A549 (cell line): ENCODE measurements at regions of chr2 and their contacts with region 1.

Region 1: GRCh38 chr2:28594289-28595108 is 98.6 kb downstream of the PLB1 start:
- DNase-seq: peak; percentile 89 to 90
- ATAC-seq: peak; percentile 59 to 86
- H3K4me3 ChIP-seq: no peak overlapping the region
- H3K27ac ChIP-seq: peak overlapping the region; percentile 69 to 80
- H3K4me1 ChIP-seq: peaks cover 28% of the 10 kb centered on the region
- CTCF ChIP-seq: peak; percentile 97
- EP300 ChIP-seq: no peak
- POLR2A ChIP-seq: no peak
- RAD21 ChIP-seq: peak; percentile 93 to 96

Region 2: DNA sequence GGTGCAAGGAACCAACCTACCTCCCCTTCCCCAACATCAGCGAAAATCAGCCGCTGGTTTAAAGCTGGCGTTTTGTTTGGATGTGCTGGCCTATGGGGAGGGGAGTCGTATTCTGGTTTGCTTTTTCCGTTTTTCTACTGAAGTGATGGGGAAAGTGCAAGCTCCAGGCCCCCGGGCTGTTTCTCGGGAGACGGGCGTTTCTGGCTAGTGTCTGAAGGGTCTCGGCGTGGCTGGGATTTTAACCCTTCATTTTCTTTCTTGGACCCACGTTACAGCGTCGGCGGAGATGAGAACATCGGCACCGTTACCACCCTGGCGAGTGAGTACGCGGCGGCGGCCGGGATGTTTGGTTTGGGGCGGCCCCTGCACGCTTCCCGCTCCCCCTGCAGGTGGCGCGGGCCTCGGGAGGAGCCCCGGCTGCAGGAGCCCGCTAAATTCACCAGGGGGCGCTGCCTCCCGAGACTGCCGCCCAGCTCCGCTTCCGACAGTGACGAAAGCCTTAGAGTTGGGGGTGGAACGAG is 27.9 kb before region 1 on chr2:
- CTCF ChIA-PET with region 1: interaction called, 167 read pairs
- POLR2A ChIA-PET with region 1: interaction called, 3 read pairs
- DNase-seq: peak; percentile 87 to 92
- ATAC-seq: peak; percentile 97 to 98
- H3K4me3 ChIP-seq: peak overlapping the region; percentile 46
- H3K27ac ChIP-seq: peak overlapping the region; percentile 77 to 89
- H3K4me1 ChIP-seq: peaks cover 22% of the 10 kb centered on the region
- CTCF ChIP-seq: peak; percentile 100
- EP300 ChIP-seq: no peak
- POLR2A ChIP-seq: 0 out of 2 replicates have a peak, but pooled peaks have one; percentile 19
- RAD21 ChIP-seq: peak; percentile 93 to 100

Region 3: DNA sequence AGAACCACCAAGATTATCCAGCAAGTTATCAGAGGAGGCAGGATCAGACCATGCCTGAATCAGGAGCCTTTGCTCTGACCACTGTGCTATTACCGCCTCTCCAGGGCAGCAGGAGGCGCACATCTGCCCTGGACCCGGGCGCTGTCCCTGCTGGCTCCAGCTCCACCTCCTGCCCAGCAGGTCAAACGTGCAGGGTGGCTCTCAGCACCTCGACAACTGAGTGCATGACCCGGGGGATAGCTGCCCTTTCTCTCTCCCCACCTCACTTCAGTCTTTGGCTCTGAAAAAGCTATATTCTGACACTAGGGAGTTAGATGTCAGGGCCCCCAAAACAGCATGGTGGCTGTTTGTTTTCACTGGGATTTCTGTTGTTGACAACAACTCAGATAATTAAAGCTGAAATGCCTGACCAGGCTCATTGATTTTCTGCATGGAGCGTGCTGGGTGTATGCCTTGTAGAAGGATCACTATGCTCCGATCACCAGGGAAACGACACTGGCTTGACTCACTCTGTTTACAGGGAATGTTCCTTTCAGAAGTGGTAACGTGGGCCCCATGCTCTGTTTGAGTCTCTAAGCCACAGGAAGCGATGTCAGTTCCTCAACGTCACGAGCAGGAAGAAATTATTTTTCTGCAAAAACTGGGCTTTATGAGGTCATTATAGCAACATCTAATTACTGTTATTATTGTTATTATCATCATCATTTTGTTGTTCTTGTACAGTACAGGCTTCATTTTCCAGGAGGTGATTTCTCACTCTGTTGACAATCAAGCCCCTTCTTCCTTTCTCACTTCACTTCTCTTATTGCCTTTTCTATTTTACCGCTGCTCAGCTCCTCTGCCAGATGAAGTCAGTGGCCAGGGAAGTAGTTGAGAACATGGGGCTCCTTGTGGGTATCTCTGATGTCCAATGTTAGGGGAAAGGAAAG is 26.9 kb after region 1 on chr2:
- CTCF ChIA-PET with region 1: interaction called, 20 read pairs
- POLR2A ChIA-PET with region 1: no interaction called
- DNase-seq: peak; percentile 43 to 68
- ATAC-seq: peak; percentile 90 to 96
- H3K4me3 ChIP-seq: no peak overlapping the region
- H3K27ac ChIP-seq: peak overlapping the region; percentile 42 to 61; a peak in 4 of 6 replicates
- H3K4me1 ChIP-seq: peaks cover 9% of the 10 kb centered on the region
- CTCF ChIP-seq: peak; percentile 54
- EP300 ChIP-seq: no peak
- POLR2A ChIP-seq: no peak
- RAD21 ChIP-seq: peak; percentile 69 to 77

Region 4: DNA sequence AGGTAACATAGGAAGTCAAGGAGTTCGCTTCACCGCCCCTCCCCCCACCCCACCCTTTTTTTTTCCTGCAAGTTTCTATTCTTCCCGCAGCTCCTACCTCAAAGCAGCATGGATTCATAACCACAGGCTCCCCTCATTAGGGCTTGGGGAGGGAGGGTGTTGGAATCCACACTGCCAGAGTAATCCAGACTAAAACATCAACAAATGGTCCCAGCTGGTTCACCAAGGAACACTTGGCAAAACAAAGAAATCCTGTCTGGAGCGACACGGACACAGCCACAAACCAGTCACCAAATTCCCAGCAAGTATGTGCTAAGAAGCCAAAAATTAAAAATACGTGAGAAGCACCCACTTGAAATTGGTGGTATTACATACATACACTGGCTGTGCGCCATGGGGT is 50.3 kb after region 1 on chr2:
- CTCF ChIA-PET with region 1: no interaction called
- POLR2A ChIA-PET with region 1: no interaction called
- DNase-seq: no peak
- ATAC-seq: no peak
- H3K4me3 ChIP-seq: no peak overlapping the region
- H3K27ac ChIP-seq: peak overlapping the region in 1 of 2 experiments; percentile 32; a peak in 2 of 6 replicates
- H3K4me1 ChIP-seq: peaks cover 12% of the 10 kb centered on the region
- CTCF ChIP-seq: no peak
- EP300 ChIP-seq: no peak
- POLR2A ChIP-seq: no peak
- RAD21 ChIP-seq: no peak

Region 5: GRCh38 chr2:28709101-28709500 is 114.6 kb after region 1 on chr2:
- CTCF ChIA-PET with region 1: interaction called, 42 read pairs
- POLR2A ChIA-PET with region 1: no interaction called
- DNase-seq: peak in 1 of 2 experiments; percentile 12
- ATAC-seq: no peak
- H3K4me3 ChIP-seq: no peak overlapping the region
- H3K27ac ChIP-seq: peak overlapping the region; percentile 19 to 82; a peak in 5 of 6 replicates
- H3K4me1 ChIP-seq: peaks cover 49% of the 10 kb centered on the region
- CTCF ChIP-seq: no peak
- EP300 ChIP-seq: no peak
- POLR2A ChIP-seq: no peak
- RAD21 ChIP-seq: no peak

Region 6: DNA sequence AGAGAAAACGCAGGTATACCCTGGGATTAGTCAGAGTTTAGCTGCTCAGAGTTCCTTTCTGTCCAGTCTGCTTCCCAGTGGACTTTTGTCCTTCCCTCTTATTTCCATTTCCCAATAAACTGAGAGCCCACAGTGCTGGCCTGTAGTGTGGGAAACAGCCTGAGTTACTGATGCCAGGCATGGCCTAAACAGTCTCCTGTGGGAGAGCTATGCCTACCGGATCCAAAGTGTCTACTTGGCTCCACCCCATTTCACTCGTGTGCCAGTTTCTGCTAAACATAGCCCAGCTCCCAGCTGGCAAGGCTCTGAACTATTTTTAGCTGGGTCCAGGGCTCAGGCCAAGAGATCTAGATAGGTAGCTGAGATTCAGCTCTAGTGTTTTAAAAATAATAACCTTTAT is 141.5 kb after region 1 on chr2:
- CTCF ChIA-PET with region 1: interaction called, 16 read pairs
- POLR2A ChIA-PET with region 1: no interaction called
- DNase-seq: no peak
- ATAC-seq: peak; percentile 66 to 68; a peak in 5 of 6 replicates
- H3K4me3 ChIP-seq: no peak overlapping the region
- H3K27ac ChIP-seq: no peak overlapping the region
- H3K4me1 ChIP-seq: no peaks in the 10 kb centered on the region
- CTCF ChIP-seq: no peak
- EP300 ChIP-seq: no peak
- POLR2A ChIP-seq: no peak
- RAD21 ChIP-seq: no peak

Region 7: GRCh38 chr2:28768422-28768821 is 173.9 kb after region 1 on chr2:
- CTCF ChIA-PET with region 1: interaction called, 26 read pairs
- POLR2A ChIA-PET with region 1: no interaction called
- DNase-seq: no peak
- ATAC-seq: no peak
- H3K4me3 ChIP-seq: no peak overlapping the region
- H3K27ac ChIP-seq: no peak overlapping the region
- H3K4me1 ChIP-seq: peaks cover 8% of the 10 kb centered on the region; the same call in 1 of the 3 replicates
- CTCF ChIP-seq: no peak
- EP300 ChIP-seq: no peak
- POLR2A ChIP-seq: no peak
- RAD21 ChIP-seq: no peak

Region 8: DNA sequence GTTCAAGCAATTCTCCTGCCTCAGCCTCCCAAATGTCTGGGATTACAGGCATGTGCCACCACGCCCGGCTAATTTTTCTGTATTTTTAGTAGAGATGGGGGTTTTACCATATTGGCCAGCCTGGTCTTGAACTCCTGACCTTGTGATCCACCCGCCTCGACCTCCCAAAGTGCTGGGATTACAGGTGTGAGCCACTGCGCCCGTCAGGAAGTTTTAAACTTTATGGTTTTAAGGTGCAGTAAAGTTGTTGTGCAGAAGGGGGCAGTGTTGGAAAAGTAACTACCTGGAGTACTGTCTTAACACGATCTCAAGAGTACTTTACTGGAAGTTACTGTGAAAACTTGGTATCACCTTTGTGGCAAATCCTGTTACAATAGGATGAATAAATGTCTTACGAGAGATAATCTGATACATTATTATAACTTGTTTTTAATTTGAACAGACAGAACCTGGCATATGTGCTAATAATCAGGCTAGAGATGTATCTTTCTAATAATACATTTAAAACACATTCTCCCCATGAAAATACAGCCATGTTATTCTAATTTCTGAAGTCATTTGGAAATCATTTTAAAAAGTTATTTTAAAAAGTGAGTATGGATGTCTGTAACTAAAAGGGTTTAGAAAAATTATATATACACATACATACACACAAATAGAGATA is 226.9 kb after region 1 on chr2:
- CTCF ChIA-PET with region 1: interaction called, 11 read pairs
- POLR2A ChIA-PET with region 1: no interaction called
- DNase-seq: peak; percentile 50 to 88
- ATAC-seq: peak; percentile 90 to 92
- H3K4me3 ChIP-seq: no peak overlapping the region
- H3K27ac ChIP-seq: no peak overlapping the region
- H3K4me1 ChIP-seq: peaks cover 6% of the 10 kb centered on the region; the same call in 2 of the 3 replicates
- CTCF ChIP-seq: peak; percentile 86
- EP300 ChIP-seq: no peak
- POLR2A ChIP-seq: no peak
- RAD21 ChIP-seq: peak; percentile 84 to 91